K562 (cell line): ENCODE measurements at regions of chr5 and their contacts with region 1.

Region 1: DNA sequence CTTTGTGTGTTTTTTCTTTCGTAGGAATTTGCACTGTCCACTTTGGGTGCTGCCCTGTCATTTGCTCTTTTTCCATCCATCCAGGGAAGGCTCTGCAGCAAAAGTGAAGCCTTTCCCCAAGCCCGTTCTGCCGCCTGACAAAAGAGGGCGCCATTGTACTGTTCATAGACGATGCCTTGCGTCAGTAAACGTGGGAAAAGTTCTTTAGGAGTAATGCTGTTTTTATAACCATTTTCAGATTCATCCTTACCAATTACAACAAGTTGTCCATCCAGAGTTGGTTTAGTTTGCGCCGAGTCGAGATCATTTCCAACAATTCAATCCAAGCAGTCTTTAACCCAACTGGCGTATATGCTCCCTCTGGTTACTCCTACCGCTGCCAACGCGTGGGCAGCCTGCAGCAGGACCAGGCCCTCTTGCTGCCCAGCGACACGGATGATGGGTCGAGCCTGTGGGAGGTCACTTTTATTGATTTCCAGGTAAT is 34.3 kb upstream of the RPS23 start:
- DNase-seq: peak; percentile 52 to 84 (median 56)
- ATAC-seq: peak; percentile 93
- H3K4me3 ChIP-seq: no peak overlapping the region
- H3K27ac ChIP-seq: no peak overlapping the region
- H3K4me1 ChIP-seq: peaks cover 0 to 10% of the 10 kb centered on the region in 2 experiments; a peak in 4 of 5 replicates
- H3K27me3 ChIP-seq: no peaks in the 10 kb centered on the region
- CTCF ChIP-seq: peak; percentile 81 to 95 (median 95)
- EP300 ChIP-seq: no peak
- POLR2A ChIP-seq: no peak
- RAD21 ChIP-seq: peak; percentile 82 to 93

Region 2: DNA sequence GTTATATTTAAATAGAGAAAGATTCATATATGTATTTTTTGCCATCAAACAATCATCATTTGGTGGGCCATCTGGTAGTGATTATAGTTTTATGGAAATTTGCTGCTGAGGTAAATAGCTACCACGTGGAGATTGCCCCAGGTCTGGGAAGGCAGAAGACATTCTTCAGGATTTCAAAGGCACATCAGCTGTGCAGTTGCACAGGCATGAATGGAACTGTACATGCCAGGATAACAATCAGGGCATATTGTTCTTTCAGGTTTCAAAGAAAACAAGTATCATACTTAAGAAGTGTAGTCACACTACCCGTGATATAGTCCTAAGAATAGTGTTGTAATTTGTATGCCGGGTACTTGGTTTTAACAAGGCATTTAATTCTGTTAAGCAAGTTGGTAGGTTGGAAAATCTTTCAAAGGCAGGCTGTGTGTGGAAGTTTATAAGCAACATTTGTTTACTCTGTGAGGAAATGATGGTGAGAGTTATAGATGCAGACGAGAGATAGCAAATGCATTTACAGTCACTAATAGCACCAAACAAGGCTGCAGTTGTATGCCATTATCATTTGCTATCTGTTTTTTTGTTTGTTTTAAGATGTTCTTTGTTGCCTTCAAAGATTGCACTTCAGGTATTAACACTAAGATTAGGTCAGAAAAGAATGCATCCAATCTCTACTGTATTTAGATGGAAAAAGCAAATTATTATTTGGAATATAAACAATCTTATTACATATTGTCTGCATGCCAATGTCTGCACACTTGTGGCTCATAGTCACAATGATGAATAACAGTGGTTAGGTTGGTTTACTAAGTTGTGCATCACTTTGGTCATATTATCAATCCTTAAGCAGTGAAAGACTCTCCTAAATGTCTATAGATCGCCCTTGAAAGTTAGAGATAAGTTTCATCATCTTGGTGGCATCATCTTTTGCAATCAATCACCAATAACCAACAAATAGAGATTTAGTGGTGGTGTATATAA is 89.5 kb before region 1 on chr5:
- CTCF ChIA-PET with region 1: no interaction called
- POLR2A ChIA-PET with region 1: no interaction called
- in situ Hi-C with region 1: no loop called
- intact Hi-C with region 1: no loop called
- DNase-seq: no peak
- ATAC-seq: no peak
- H3K4me3 ChIP-seq: no peak overlapping the region
- H3K27ac ChIP-seq: no peak overlapping the region
- H3K4me1 ChIP-seq: no peaks in the 10 kb centered on the region
- H3K27me3 ChIP-seq: no peaks in the 10 kb centered on the region
- CTCF ChIP-seq: no peak
- EP300 ChIP-seq: no peak
- POLR2A ChIP-seq: no peak
- RAD21 ChIP-seq: no peak

Region 3: DNA sequence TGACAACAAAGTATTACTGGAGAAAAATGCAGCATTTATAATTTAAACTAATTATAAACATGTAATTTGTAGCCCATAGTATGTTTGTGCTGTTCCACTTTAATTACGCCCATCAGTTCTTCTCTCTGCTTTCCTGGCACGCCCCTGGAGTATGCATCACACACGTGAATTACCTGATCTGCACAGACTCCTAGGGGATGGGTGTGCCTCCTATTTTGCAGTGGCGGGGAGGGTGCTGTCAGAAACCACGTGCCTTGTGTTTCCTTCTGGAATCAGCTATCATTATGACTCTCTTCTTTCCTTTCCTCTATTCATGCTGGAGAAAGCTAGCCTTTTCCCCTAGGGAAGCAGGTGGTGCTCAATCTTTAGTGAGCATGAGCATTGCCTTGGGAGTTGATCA is 77.5 kb before region 1 on chr5:
- CTCF ChIA-PET with region 1: no interaction called
- POLR2A ChIA-PET with region 1: no interaction called
- in situ Hi-C with region 1: no loop called
- intact Hi-C with region 1: no loop called
- DNase-seq: no peak
- ATAC-seq: peak; percentile 33; the same call in 1 of the 3 replicates
- H3K4me3 ChIP-seq: no peak overlapping the region
- H3K27ac ChIP-seq: no peak overlapping the region
- H3K4me1 ChIP-seq: no peaks in the 10 kb centered on the region
- H3K27me3 ChIP-seq: no peaks in the 10 kb centered on the region
- CTCF ChIP-seq: no peak
- EP300 ChIP-seq: no peak
- POLR2A ChIP-seq: no peak
- RAD21 ChIP-seq: no peak

Region 4: GRCh38 chr5:82335806-82336205 is 23.4 kb after region 1 on chr5:
- CTCF ChIA-PET with region 1: no interaction called
- POLR2A ChIA-PET with region 1: interaction called, 3 read pairs
- in situ Hi-C with region 1: no loop called
- intact Hi-C with region 1: loop called (anchors 2 kb)
- DNase-seq: no peak
- ATAC-seq: no peak
- H3K4me3 ChIP-seq: no peak overlapping the region
- H3K27ac ChIP-seq: no peak overlapping the region
- H3K4me1 ChIP-seq: peaks cover 0 to 15% of the 10 kb centered on the region in 2 experiments; a peak in 4 of 5 replicates
- H3K27me3 ChIP-seq: no peaks in the 10 kb centered on the region; a peak in 1 of 5 replicates
- CTCF ChIP-seq: no peak
- EP300 ChIP-seq: no peak
- POLR2A ChIP-seq: no peak
- RAD21 ChIP-seq: no peak

Region 5: GRCh38 chr5:82793808-82794419 is 481.5 kb after region 1 on chr5:
- CTCF ChIA-PET with region 1: no interaction called
- POLR2A ChIA-PET with region 1: no interaction called
- in situ Hi-C with region 1: no loop called
- intact Hi-C with region 1: loop called (anchors 5 kb)
- DNase-seq: peak; percentile 39 to 52 (median 46)
- ATAC-seq: peak; percentile 63; the same call in 1 of the 3 replicates
- H3K4me3 ChIP-seq: no peak overlapping the region
- H3K27ac ChIP-seq: no peak overlapping the region
- H3K4me1 ChIP-seq: peaks cover 0 to 3% of the 10 kb centered on the region in 2 experiments; a peak in 1 of 5 replicates
- H3K27me3 ChIP-seq: no peaks in the 10 kb centered on the region
- CTCF ChIP-seq: peak; percentile 51 to 68 (median 62); a peak in 5 of 6 replicates
- EP300 ChIP-seq: no peak
- POLR2A ChIP-seq: no peak
- RAD21 ChIP-seq: peak in 1 of 2 experiments; percentile 54; a peak in 2 of 4 replicates

Region 6: GRCh38 chr5:83430130-83431010 is 1118.0 kb after region 1 on chr5:
- CTCF ChIA-PET with region 1: no interaction called
- POLR2A ChIA-PET with region 1: no interaction called
- in situ Hi-C with region 1: no loop called
- intact Hi-C with region 1: loop called (anchors 10 kb)
- DNase-seq: peak; percentile 48 to 79 (median 54)
- ATAC-seq: peak; percentile 99
- H3K4me3 ChIP-seq: no peak overlapping the region
- H3K27ac ChIP-seq: no peak overlapping the region
- H3K4me1 ChIP-seq: no peaks in the 10 kb centered on the region
- H3K27me3 ChIP-seq: no peaks in the 10 kb centered on the region; a peak in 1 of 5 replicates
- CTCF ChIP-seq: peak; percentile 87 to 98 (median 97)
- EP300 ChIP-seq: no peak
- POLR2A ChIP-seq: no peak
- RAD21 ChIP-seq: peak; percentile 73 to 92

Region 7: GRCh38 chr5:83473346-83474163 is 1161.1 kb after region 1 on chr5:
- CTCF ChIA-PET with region 1: no interaction called
- POLR2A ChIA-PET with region 1: no interaction called
- in situ Hi-C with region 1: no loop called
- intact Hi-C with region 1: loop called (anchors 2 kb)
- DNase-seq: peak; percentile 64 to 77 (median 70)
- ATAC-seq: peak; percentile 85
- H3K4me3 ChIP-seq: peak overlapping the region; percentile 40
- H3K27ac ChIP-seq: peak overlapping the region; percentile 53; the same call in 1 of the 3 replicates
- H3K4me1 ChIP-seq: peaks cover 5 to 36% of the 10 kb centered on the region in 2 experiments; a peak in 3 of 5 replicates
- H3K27me3 ChIP-seq: peaks cover 11 to 25% of the 10 kb centered on the region in 2 experiments; a peak in 4 of 5 replicates
- CTCF ChIP-seq: peak; percentile 73 to 87 (median 76)
- EP300 ChIP-seq: no peak
- POLR2A ChIP-seq: no peak
- RAD21 ChIP-seq: peak; percentile 71 to 78

Region 8: DNA sequence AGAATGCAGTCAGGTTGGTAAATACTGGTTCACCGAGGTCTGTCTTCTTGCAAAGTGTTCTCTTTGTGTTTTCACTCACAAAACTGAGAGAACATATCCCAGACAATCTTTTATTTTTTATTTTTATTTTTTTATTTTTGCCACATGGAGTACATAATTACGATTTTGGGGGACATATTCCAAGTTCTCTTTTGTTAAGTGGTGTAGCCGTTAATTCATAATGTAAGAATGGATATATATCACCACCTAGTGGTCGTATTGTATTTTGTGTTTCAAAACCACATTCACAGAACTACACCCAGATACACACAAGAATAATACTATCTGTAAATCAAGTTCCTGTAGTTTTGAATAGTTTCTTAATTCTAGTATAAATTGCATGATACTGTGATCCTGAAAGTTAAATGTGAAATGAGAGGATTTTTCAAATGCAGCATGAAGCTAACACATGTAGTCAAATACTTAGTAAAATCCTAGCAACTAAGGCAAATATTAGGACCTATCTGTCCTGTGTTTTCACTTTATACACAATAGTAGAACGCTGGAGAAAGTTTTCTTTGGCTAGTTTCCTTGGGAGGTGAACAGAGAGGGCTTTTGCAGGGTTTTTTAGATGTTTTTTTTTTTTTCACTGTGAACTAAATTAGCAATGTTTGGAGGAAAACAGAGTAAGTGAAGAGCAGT is 1251.8 kb after region 1 on chr5:
- CTCF ChIA-PET with region 1: interaction called, 5 read pairs
- POLR2A ChIA-PET with region 1: no interaction called
- in situ Hi-C with region 1: no loop called
- intact Hi-C with region 1: loop called (anchors 1 kb)
- DNase-seq: peak; percentile 35 to 49 (median 43)
- ATAC-seq: peak; percentile 82
- H3K4me3 ChIP-seq: no peak overlapping the region
- H3K27ac ChIP-seq: no peak overlapping the region
- H3K4me1 ChIP-seq: no peaks in the 10 kb centered on the region
- H3K27me3 ChIP-seq: no peaks in the 10 kb centered on the region; a peak in 1 of 5 replicates
- CTCF ChIP-seq: peak in 2 of 3 experiments; percentile 29 to 68; a peak in 3 of 6 replicates
- EP300 ChIP-seq: no peak
- POLR2A ChIP-seq: no peak
- RAD21 ChIP-seq: peak; percentile 84 to 86